H1 (cell line): ENCODE measurements at regions of chr20 and their contacts with region 1.

Region 1: DNA sequence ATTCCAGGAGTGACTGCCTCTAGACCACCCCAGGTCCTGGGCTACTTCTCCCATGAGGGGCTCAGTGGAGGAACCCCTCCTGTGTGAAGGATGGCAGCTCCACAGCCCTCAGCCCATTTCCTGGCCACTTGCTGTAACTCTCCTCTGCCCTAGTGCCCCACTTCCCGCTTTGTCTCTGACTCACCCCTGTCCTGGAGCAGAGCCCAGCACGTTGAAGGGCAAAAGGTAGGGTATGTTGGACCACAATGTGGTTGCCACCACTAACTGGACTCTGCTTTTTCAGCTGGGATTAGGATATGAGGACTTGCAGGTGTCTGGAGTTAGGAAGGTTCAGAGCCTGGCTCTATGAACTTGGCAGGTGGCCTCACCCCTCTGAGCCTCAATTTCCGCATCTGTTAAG is 2.4 kb downstream of the MYBL2 start:
- DNase-seq: no peak
- H3K4me3 ChIP-seq: no peak overlapping the region
- H3K27ac ChIP-seq: no peak overlapping the region
- H3K4me1 ChIP-seq: peaks cover 0 to 4% (median 0%) of the 10 kb centered on the region in 4 experiments; a peak in 3 of 7 replicates
- H3K27me3 ChIP-seq: peaks cover 0 to 8% (median 3%) of the 10 kb centered on the region in 4 experiments; a peak in 3 of 7 replicates
- CTCF ChIP-seq: no peak
- EP300 ChIP-seq: no peak
- POLR2A ChIP-seq: no peak; a peak in 1 of 3 replicates
- RAD21 ChIP-seq: no peak

Region 2: GRCh38 chr20:43492101-43492500 is 177.2 kb before region 1 on chr20:
- CTCF ChIA-PET with region 1: no interaction called
- POLR2A ChIA-PET with region 1: no interaction called
- DNase-seq: no peak
- H3K4me3 ChIP-seq: no peak overlapping the region
- H3K27ac ChIP-seq: no peak overlapping the region
- H3K4me1 ChIP-seq: no peaks in the 10 kb centered on the region
- H3K27me3 ChIP-seq: no peaks in the 10 kb centered on the region
- CTCF ChIP-seq: no peak
- EP300 ChIP-seq: no peak
- POLR2A ChIP-seq: no peak
- RAD21 ChIP-seq: no peak

Region 3: DNA sequence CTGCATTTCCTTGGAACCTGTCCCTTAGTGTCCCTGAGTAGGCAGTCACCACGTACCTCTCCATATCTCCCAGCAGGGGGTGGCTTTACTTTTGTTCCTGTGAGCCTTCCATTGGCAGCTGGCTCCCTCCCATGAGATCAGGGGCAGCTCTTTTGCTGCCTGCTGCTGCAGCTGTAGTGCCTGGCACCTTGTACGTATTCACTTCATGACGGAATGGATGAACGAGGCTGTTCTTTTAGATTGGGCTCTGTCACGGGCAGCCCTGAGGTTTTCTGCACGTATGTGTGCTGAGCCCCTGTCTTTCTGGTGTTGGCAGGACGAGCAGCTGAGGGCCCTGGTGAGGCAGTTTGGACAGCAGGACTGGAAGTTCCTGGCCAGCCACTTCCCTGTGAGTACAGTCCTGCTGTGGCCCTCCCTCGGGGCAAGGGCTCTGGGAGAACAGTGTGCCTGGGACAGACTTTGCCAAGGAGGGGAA is 12.2 kb after region 1 on chr20:
- CTCF ChIA-PET with region 1: interaction called, 3 read pairs
- POLR2A ChIA-PET with region 1: interaction called, 15 read pairs
- DNase-seq: no peak
- H3K4me3 ChIP-seq: no peak overlapping the region
- H3K27ac ChIP-seq: no peak overlapping the region; the same call in 1 of the 2 replicates
- H3K4me1 ChIP-seq: no peaks in the 10 kb centered on the region
- H3K27me3 ChIP-seq: no peaks in the 10 kb centered on the region
- CTCF ChIP-seq: no peak
- EP300 ChIP-seq: no peak
- POLR2A ChIP-seq: no peak
- RAD21 ChIP-seq: no peak

Region 4: DNA sequence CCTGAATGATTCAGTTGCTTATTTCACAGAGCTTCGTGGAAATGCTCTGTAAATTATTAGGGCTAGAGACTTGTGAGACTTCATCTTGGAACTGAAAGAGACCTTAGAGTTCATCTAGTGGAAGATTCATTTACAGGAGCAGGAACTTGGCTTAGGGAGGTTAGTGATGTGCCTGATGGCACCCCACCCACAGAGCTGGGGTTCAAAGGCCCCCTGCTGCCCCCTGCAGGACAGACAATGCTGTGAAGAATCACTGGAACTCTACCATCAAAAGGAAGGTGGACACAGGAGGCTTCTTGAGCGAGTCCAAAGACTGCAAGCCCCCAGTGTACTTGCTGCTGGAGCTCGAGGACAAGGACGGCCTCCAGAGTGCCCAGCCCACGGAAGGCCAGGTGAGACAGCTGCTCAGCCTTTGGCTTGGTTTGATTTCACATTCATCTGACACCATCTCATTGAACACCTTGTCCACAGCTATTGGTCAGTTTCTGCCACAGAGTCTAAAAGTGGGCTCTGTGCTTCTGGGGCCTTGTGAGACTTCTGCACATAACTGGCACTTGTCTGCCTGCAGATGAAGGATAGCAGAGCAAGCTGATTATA is 22.7 kb after region 1 on chr20:
- CTCF ChIA-PET with region 1: interaction called, 3 read pairs
- POLR2A ChIA-PET with region 1: interaction called, 10 read pairs
- DNase-seq: peak; percentile 25 to 78
- H3K4me3 ChIP-seq: no peak overlapping the region
- H3K27ac ChIP-seq: no peak overlapping the region
- H3K4me1 ChIP-seq: peaks cover 0 to 2% (median 0%) of the 10 kb centered on the region in 4 experiments; a peak in 1 of 7 replicates
- H3K27me3 ChIP-seq: no peaks in the 10 kb centered on the region
- CTCF ChIP-seq: peak; percentile 59 to 61 (median 61)
- EP300 ChIP-seq: no peak
- POLR2A ChIP-seq: no peak
- RAD21 ChIP-seq: peak; percentile 63 to 74